Common myeloid progenitor, CD34-positive (primary cell): ENCODE measurements at regions of chr6 and their contacts with region 1.

Region 1: GRCh38 chr6:34055223-34055933 is 90.5 kb downstream of the GRM4 start:
- DNase-seq: peak; percentile 81 to 91 (median 84)
- H3K4me3 ChIP-seq: no peak overlapping the region
- H3K27ac ChIP-seq: no peak overlapping the region
- H3K4me1 ChIP-seq: peaks cover 0 to 6% (median 0%) of the 10 kb centered on the region in 4 experiments
- H3K27me3 ChIP-seq: peaks cover 0 to 5% (median 0%) of the 10 kb centered on the region in 5 experiments

Region 2: DNA sequence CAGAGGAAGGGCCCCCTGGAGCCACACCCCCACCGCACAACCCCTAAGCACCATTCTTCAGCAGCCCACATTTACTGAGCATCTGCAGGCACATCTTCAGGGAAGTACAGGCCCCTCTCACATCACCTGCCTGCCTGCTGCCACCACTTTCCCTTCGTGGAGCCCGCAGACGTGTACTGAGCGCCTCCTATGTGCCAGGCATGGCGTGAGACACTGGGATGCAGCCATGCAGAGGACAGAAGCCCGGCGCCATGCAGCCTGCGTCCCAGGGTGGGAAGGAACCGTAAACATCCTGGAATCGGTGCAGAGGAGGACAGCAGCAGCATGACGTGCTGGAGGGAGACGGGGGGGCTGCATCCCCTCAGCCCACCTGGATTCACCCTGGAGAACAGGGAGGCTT is 12.4 kb after region 1 on chr6:
- CTCF ChIA-PET with region 1: interaction called, 29 read pairs
- POLR2A ChIA-PET with region 1: no interaction called
- DNase-seq: no peak
- H3K4me3 ChIP-seq: no peak overlapping the region
- H3K27ac ChIP-seq: no peak overlapping the region
- H3K4me1 ChIP-seq: no peaks in the 10 kb centered on the region
- H3K27me3 ChIP-seq: peaks cover 0 to 40% (median 0%) of the 10 kb centered on the region in 5 experiments

Region 3: GRCh38 chr6:34154668-34155447 is 99.5 kb after region 1 on chr6:
- CTCF ChIA-PET with region 1: interaction called, 38 read pairs
- POLR2A ChIA-PET with region 1: interaction called, 4 read pairs
- DNase-seq: peak; percentile 39 to 67 (median 61)
- H3K4me3 ChIP-seq: peak overlapping the region in 2 of 7 experiments; percentile 19 to 45
- H3K27ac ChIP-seq: no peak overlapping the region
- H3K4me1 ChIP-seq: peaks cover 0 to 9% (median 7%) of the 10 kb centered on the region in 4 experiments
- H3K27me3 ChIP-seq: peaks cover 0 to 75% (median 26%) of the 10 kb centered on the region in 5 experiments

Region 4: DNA sequence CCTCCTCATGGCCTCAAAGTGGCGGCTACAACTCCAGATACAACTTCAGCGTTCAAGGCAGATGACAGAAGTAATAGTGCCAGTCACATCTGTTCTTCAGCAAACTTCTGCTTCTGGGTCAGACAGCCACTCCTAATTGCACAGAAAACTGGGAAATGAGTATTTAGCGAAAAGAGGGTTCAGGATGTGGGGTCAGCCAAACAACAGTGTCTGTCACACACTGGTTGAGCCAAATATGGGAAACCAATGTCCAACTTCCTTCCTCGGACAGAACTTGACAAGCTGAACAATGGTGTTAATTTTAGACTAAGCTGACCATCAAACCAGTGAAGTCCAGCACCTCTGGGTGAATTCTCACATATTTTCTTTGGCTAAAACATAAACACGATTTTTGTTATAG is 315.0 kb after region 1 on chr6:
- CTCF ChIA-PET with region 1: no interaction called
- POLR2A ChIA-PET with region 1: no interaction called
- DNase-seq: no peak
- H3K4me3 ChIP-seq: no peak overlapping the region
- H3K27ac ChIP-seq: peak overlapping the region in 1 of 2 experiments; percentile 51
- H3K4me1 ChIP-seq: peaks cover 0 to 24% (median 16%) of the 10 kb centered on the region in 4 experiments
- H3K27me3 ChIP-seq: no peaks in the 10 kb centered on the region